ENCODE measurements at regions of chr7 and their contacts with region 1.

Region 1: DNA sequence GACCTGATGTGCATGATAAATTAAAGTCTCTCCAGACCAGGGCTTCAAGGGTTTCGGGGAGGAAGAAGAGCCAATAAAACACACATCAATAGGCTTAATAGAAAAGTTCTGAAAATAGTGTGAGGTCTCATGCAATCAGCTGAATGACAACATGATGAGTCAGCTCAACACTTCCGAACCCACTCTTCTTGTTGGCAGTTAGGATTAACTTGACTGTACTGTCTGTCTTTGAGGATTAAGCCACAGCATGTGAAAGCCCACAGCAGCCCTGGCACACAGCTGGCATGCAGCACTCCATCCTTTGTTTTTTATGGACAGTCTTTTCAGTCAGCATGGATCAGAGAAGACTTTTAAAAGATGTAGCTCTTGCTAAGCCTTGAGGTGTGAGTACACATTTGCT is 526.9 kb upstream of the VSTM2A start:
- DNase-seq: no peak
- H3K4me3 Mint-ChIP-seq: no peak overlapping the region
- H3K27ac Mint-ChIP-seq: no peak overlapping the region
- H3K4me1 Mint-ChIP-seq: no peaks in the 10 kb centered on the region
- H3K27me3 Mint-ChIP-seq: no peaks in the 10 kb centered on the region

Region 2: GRCh38 chr7:53996876-53997275 is 18.4 kb before region 1 on chr7:
- CTCF ChIA-PET with region 1: no interaction called
- intact Hi-C with region 1: loop called (anchors 1 kb)
- DNase-seq: no peak
- H3K4me3 Mint-ChIP-seq: no peak overlapping the region
- H3K27ac Mint-ChIP-seq: no peak overlapping the region
- H3K4me1 Mint-ChIP-seq: no peaks in the 10 kb centered on the region
- H3K27me3 Mint-ChIP-seq: no peaks in the 10 kb centered on the region

Region 3: DNA sequence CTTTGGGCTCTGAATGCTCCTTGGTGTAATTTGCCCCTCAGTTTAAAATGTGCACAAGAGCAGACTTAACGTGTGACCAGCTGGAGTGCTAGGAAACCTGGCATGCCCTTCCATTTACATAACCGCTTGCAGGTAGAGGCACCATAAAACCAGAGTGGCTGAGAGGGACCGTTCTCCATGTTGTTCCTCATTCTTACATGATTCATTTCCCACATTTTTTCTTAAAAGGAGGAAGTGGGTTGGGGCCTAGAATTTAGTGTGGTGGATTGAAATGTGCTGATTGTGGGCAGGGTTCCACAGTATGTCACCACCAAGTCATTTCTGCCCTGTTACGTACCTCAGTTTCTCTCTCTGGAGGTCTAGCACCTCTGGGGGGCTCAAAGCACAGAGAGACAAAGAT is 151.2 kb after region 1 on chr7:
- CTCF ChIA-PET with region 1: no interaction called
- intact Hi-C with region 1: no loop called
- DNase-seq: no peak
- H3K4me3 Mint-ChIP-seq: no peak overlapping the region
- H3K27ac Mint-ChIP-seq: no peak overlapping the region
- H3K4me1 Mint-ChIP-seq: no peaks in the 10 kb centered on the region
- H3K27me3 Mint-ChIP-seq: no peaks in the 10 kb centered on the region

Measured in activated naive CD4-positive, alpha-beta T cell treated with anti-CD3 and anti-CD28 coated beads for 36 hours (primary cell).